ENCODE measurements at regions of chr3 and their contacts with region 1.

Region 1: GRCh38 chr3:196572389-196572788 is 3.9 kb downstream of the FBXO45 start:
- DNase-seq: no peak

Region 2: GRCh38 chr3:196518966-196519717 is 53.2 kb before region 1 on chr3:
- intact Hi-C with region 1: no loop called
- DNase-seq: no peak

Region 3: DNA sequence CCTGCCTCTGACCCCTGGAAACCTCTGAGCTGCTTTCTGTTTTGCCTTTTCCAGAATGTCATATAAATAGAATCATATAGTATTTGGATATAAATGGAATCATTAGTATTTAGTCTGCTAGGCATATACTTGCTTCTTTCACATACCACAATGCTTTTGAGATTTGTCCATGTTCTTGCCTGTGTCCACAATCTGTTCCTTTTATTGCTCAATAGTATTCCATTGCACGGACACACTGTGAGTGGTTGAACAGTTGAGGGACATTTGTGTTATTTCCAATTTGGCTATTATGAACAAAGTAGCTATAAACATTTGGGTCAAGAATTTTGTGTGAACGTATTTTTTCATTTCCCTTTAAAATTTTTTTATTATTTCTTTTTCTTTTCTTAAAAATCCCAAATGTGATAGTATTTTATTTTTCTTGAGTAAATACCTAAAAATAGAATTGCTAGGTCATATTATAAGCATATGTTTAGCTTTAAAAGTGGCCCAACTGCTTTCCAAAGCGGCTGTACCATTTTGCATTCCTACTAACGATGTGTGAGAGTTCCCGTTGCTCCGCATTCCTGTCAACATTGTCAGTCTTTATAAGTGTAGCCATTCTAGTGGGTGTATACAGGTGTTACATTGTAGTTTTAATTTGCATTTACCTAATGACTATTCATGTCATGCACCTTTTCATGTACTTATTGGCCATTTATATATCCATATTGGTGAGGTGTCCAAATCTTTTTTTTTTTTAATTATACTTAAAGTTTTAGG is 30.5 kb before region 1 on chr3:
- intact Hi-C with region 1: loop called in 1 of 2 experiments (anchors 2 kb)
- DNase-seq: no peak

Region 4: DNA sequence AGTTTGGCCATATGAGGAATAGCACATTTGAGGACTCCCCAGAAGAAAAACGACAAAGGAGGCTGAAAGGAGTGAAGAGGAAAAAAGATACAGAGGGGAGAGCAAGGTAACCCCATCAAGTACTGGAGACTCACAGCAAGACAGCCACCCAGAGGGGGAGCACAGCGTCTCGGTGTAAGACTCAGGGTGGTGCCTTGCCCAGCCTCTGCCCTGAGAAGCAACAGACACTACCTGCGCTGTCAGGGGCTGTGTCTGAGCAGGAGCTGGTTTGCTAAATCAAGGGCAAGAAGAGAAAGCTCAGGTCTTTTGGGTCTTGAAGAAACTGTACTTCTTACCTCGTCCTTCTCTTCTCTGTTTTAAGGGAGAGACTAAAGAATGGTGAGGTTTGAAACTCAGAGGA is 24.0 kb after region 1 on chr3:
- intact Hi-C with region 1: loop called in 1 of 2 experiments (anchors 1 kb)
- DNase-seq: no peak

Measured in posterior vena cava (tissue), 2 donors.